ENCODE measurements at regions of chr6 and their contacts with region 1.

Region 1: GRCh38 chr6:13427801-13428582 is 59.4 kb downstream of the GFOD1 start:
- DNase-seq: peak; percentile 80 to 85
- ATAC-seq: peak; percentile 63 to 85 (median 83)
- H3K4me3 ChIP-seq: peak overlapping the region; percentile 10
- H3K4me3 Mint-ChIP-seq: peak overlapping the region; percentile 78
- H3K27ac ChIP-seq: peak overlapping the region; percentile 94
- H3K27ac Mint-ChIP-seq: peak overlapping the region; percentile 98 to 99
- H3K4me1 ChIP-seq: peaks cover 94% of the 10 kb centered on the region
- H3K4me1 Mint-ChIP-seq: peaks cover 95 to 96% of the 10 kb centered on the region in 2 donors
- H3K27me3 ChIP-seq: no peaks in the 10 kb centered on the region
- H3K27me3 Mint-ChIP-seq: no peaks in the 10 kb centered on the region
- CTCF ChIP-seq: peak; percentile 18

Region 2: GRCh38 chr6:13175759-13176158 is 252.2 kb before region 1 on chr6:
- intact Hi-C with region 1: no loop called
- DNase-seq: no peak
- ATAC-seq: no peak
- H3K4me3 ChIP-seq: no peak overlapping the region
- H3K4me3 Mint-ChIP-seq: no peak overlapping the region
- H3K27ac ChIP-seq: no peak overlapping the region
- H3K27ac Mint-ChIP-seq: no peak overlapping the region
- H3K4me1 ChIP-seq: no peaks in the 10 kb centered on the region
- H3K4me1 Mint-ChIP-seq: peaks cover 4 to 6% of the 10 kb centered on the region in 2 donors
- H3K27me3 ChIP-seq: no peaks in the 10 kb centered on the region
- H3K27me3 Mint-ChIP-seq: peaks cover 13 to 21% of the 10 kb centered on the region in 2 donors
- CTCF ChIP-seq: no peak

Region 3: DNA sequence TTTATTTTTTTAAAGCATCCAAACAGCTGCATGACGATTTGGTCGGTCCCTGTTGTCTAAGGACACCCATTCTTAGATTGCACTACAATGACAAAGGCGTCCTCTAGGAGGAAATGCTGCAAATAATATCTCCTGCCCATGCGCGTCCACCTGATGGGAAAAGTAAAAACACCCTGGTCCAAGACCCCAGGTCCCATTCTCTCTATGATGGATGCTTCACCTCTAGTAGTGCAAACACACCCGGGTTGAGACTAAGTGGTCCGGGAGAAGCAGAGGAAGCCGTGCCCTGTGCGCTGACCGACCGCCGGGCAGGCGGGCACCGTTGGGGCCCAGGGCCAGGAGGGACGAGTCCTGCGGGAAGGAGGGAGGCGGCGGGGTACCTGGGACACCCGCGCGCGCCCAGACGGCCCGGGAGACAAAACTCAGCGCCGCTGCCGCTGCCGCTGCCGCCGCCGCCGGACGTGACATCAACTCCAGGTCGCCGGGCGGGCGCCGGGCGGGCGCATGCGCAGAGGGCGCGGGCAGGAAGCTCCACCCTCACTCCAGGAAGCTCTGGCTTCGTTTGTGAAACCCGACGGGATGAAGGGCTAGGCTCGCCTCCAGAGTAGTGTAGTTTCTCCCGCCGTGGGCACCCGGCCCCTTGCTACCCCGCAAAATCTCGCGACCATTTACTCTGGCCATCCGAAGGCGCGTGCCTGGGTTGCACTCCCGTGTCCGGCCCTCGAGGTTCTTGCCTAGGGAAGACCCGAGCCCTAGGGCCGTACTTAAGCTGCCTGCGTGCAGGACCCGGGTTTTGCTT is 99.7 kb before region 1 on chr6 and contains the start of gene TBC1D7:
- intact Hi-C with region 1: loop called (anchors 2 kb)
- DNase-seq: peak; percentile 94 to 95
- ATAC-seq: peak; percentile 89 to 95 (median 90)
- H3K4me3 ChIP-seq: peak within 1 kb of the TSS; percentile 74
- H3K4me3 Mint-ChIP-seq: peak within 1 kb of the TSS; percentile 92
- H3K27ac ChIP-seq: peak within 1 kb of the TSS; percentile 90
- H3K27ac Mint-ChIP-seq: peak within 1 kb of the TSS; percentile 93 to 95
- H3K4me1 ChIP-seq: peaks cover 8% of the 10 kb centered on the region
- H3K4me1 Mint-ChIP-seq: peaks cover 14 to 20% of the 10 kb centered on the region in 2 donors
- H3K27me3 ChIP-seq: no peaks in the 10 kb centered on the region
- H3K27me3 Mint-ChIP-seq: no peaks in the 10 kb centered on the region
- CTCF ChIP-seq: no peak
- total RNA-seq, gene TBC1D7: 20.1 to 29.7 (median 24.3) TPM

Region 4: DNA sequence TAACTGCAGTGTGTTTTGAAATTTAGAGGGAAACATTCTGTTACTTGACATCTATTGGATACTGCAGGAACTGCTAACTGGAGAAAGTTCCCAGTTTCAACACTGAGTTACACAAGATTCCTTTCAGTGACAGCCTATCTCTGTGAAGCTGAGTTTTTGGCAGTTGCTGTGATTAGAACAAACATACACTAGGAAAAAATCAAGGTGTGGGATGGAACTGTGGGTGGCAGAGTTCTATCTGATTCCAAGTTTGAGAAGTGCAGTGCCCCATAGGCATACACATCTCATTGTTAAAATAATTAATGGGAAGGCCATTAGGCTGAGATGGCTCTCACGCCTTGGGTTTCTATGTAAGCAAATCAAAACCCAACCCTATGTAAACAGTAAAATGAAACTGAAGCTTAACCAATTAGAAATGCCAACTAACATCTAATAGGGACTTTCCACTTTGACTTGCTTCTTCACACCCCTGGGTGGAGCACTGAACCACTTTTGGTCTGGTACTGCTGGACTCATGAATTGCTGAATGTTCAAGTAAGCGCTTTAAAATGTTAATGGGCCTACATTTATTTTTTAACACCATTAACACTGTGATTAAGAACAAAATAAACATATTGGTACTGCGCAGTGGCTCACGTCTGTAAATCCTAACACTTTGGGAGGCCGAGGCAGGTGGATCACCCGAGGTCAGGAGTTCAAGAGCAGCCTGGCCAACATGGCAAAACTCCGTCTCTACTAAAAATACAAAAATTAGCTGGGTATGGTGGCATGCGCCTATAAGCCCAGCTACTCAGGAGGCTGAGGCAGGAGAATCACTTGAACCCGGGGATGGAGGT is 44.4 kb before region 1 on chr6:
- intact Hi-C with region 1: loop called (anchors 2 kb)
- DNase-seq: peak; percentile 45 to 73
- ATAC-seq: peak; percentile 95 to 99 (median 98)
- H3K4me3 ChIP-seq: no peak overlapping the region
- H3K4me3 Mint-ChIP-seq: peak overlapping the region; percentile 79
- H3K27ac ChIP-seq: peak overlapping the region; percentile 90
- H3K27ac Mint-ChIP-seq: peak overlapping the region; percentile 73 to 96
- H3K4me1 ChIP-seq: peaks cover 48% of the 10 kb centered on the region
- H3K4me1 Mint-ChIP-seq: peaks cover 91 to 98% of the 10 kb centered on the region in 2 donors
- H3K27me3 ChIP-seq: no peaks in the 10 kb centered on the region
- H3K27me3 Mint-ChIP-seq: no peaks in the 10 kb centered on the region
- CTCF ChIP-seq: no peak

Region 5: DNA sequence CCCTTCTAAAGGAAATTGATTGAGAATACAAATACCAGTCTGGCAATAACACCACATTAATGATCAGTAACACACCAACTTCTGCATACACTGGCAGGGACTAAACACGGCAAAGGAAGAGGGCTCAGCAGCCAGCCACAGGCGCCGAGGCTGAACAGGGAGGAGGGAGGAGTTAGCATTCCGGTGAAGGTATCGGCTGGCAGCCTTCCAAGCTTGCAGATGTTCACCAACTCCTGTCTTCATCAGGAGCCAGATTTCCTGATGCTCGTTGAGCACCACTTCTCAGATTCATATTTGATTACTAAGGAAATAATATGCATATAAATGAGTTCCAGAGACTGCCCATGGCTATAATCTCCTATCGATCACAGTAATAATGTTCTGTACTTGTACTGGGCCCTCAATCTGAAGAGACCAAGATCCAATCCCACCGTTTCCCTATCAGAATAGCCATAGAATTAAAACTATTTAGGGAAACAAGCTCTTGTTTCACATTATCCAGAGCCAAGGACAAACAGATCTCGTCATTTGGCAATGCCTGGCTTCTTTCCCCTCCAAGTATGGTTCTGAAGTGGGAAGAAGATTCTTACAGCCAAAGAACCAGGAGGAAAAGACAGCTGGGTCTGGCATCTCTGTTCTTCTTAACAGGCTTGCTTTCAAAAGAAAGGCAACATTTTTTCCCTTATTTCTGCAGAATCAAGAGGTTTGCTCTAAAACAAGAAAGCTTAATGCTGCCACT is 17.2 kb after region 1 on chr6:
- intact Hi-C with region 1: no loop called
- DNase-seq: peak in 1 of 2 donors; percentile 60
- ATAC-seq: peak in 2 of 3 donors; percentile 61 to 62
- H3K4me3 ChIP-seq: no peak overlapping the region
- H3K4me3 Mint-ChIP-seq: peak overlapping the region; percentile 70
- H3K27ac ChIP-seq: peak overlapping the region; percentile 26
- H3K27ac Mint-ChIP-seq: peak overlapping the region; percentile 97 to 99
- H3K4me1 ChIP-seq: peaks cover 54% of the 10 kb centered on the region
- H3K4me1 Mint-ChIP-seq: peaks cover 80 to 82% of the 10 kb centered on the region in 2 donors
- H3K27me3 ChIP-seq: no peaks in the 10 kb centered on the region
- H3K27me3 Mint-ChIP-seq: no peaks in the 10 kb centered on the region
- CTCF ChIP-seq: no peak

Region 6: DNA sequence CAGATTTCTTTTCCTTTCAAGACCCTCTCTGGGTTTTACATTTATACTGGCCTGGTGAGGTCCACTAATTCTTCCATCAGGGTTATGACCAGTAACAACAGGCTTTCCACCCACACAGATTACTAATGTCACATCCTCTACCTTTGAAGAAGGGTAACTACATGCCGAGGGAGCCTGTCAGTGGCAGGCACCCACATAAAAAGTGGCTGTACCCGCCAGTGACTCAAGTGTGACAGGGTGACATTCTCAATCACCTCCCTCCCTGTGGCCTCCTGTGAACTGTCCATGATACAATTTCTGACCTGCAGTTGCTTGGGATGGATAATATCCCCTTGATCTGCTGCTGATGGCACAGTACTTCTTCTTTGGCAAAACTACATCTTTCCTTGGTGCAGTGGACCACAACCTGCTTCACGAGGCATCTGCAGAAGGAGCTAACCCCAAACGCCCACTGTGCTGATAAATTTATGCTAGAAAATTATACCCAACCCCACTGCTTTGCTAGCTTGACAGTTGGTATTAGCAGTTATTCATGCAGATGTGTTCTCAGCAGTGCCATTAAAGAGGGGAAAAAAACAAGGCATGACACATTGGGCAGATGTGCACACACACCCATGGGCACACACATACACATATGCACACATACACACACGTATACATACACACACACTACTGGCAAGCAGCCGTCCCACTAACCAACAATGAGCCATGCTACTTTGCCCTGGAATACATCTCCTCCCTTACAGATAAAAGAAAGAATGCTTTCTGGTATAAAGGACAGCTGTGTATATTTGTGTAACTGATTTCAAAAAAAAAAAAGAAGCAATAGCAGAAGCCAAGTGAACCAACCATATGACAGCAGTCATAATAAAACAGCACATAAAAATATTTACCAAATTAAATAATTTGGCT is 38.6 kb after region 1 on chr6:
- intact Hi-C with region 1: loop called (anchors 5 kb)
- DNase-seq: no peak
- ATAC-seq: peak; percentile 58 to 76 (median 60)
- H3K4me3 ChIP-seq: no peak overlapping the region
- H3K4me3 Mint-ChIP-seq: peak overlapping the region; percentile 13
- H3K27ac ChIP-seq: peak overlapping the region; percentile 43
- H3K27ac Mint-ChIP-seq: peak overlapping the region; percentile 24 to 88
- H3K4me1 ChIP-seq: peaks cover 58% of the 10 kb centered on the region
- H3K4me1 Mint-ChIP-seq: peaks cover 85 to 87% of the 10 kb centered on the region in 2 donors
- H3K27me3 ChIP-seq: no peaks in the 10 kb centered on the region
- H3K27me3 Mint-ChIP-seq: no peaks in the 10 kb centered on the region
- CTCF ChIP-seq: no peak

Region 7: DNA sequence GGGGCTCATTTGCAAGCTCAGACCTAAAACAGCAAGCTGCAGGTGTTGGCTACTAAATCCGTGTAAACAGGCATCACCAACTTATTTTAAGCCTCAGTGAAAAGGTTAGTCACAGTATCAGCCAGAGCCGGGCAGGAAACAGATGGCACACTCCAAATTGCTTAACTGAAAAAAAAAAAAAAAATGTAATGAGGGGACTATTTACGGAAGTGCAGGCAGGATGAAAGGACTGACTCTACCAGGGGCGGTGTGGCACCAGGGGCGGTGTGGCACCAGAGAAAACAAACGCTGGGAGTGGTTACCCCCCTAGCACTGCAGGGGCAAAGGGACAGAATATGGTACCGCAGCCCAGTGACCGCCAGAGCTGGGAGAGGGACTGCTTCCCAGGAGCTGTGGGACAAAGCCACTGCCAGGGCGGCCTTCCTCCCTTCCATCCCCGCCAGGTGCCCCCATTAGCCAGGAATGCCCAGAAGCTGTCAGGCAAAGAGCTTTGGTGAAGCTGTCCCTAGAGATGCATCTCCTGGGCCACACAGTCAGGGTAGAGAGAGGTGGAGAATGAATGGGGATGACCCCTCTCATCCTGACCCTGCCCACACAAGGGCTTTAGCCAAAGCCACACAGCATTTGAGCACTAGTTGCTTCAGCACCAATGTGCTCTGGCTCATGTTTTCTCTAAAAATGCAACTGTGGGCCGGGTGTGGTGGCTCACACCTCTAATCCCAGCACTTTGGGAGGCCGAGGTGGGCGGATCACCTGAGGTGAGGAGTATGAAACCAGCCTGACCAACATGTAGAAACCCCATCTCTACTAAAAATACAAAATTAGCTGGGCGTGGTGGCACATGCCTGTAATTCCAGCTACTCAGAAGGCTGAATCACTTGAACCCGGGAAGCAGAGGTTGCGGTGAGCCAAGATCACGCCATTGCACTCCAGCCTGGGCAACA is 99.0 kb after region 1 on chr6:
- intact Hi-C with region 1: loop called (anchors 5 kb)
- DNase-seq: peak; percentile 27 to 62
- ATAC-seq: peak; percentile 86 to 91 (median 86)
- H3K4me3 ChIP-seq: no peak overlapping the region
- H3K4me3 Mint-ChIP-seq: peak overlapping the region; percentile 87
- H3K27ac ChIP-seq: peak overlapping the region; percentile 75
- H3K27ac Mint-ChIP-seq: peak overlapping the region; percentile 75 to 83
- H3K4me1 ChIP-seq: peaks cover 19% of the 10 kb centered on the region
- H3K4me1 Mint-ChIP-seq: peaks cover 17 to 24% of the 10 kb centered on the region in 2 donors
- H3K27me3 ChIP-seq: no peaks in the 10 kb centered on the region
- H3K27me3 Mint-ChIP-seq: no peaks in the 10 kb centered on the region
- CTCF ChIP-seq: no peak

Region 8: DNA sequence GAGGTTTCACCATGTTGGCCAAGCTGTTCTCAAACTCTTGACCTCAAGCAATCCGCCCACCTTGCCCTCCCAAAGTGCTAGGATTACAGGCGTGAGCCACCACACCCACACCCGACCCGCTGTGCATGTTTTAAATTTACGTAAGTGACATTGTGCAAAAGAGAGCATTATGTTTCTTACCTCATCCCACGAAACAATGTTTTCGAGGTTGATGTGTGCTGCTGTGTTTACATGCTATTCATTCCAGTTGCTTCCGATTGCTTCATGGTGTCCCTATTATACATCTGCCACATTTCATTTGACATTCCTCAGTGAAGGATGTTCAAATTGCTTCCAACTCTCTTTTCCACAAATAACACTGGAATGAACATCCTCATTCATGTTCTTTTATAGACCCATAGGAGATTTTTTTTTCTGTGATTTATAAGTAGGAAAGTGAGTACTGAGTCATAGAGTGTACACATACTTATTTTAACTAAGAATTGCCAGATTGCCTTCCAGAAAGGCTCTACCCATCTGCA is 1414.0 kb after region 1 on chr6:
- intact Hi-C with region 1: no loop called
- DNase-seq: no peak
- ATAC-seq: peak; percentile 27 to 69 (median 47)
- H3K4me3 ChIP-seq: no peak overlapping the region
- H3K4me3 Mint-ChIP-seq: no peak overlapping the region
- H3K27ac ChIP-seq: no peak overlapping the region
- H3K27ac Mint-ChIP-seq: peak overlapping the region; percentile 16 to 19
- H3K4me1 ChIP-seq: no peaks in the 10 kb centered on the region
- H3K4me1 Mint-ChIP-seq: peaks cover 9 to 10% of the 10 kb centered on the region in 2 donors
- H3K27me3 ChIP-seq: no peaks in the 10 kb centered on the region
- H3K27me3 Mint-ChIP-seq: peaks cover 9 to 26% of the 10 kb centered on the region in 2 donors
- CTCF ChIP-seq: no peak

Measured in natural killer cell (primary cell).